Astrocyte of the cerebellum (primary cell): ENCODE measurements at regions of chr2 and their contacts with region 1.

Region 1: DNA sequence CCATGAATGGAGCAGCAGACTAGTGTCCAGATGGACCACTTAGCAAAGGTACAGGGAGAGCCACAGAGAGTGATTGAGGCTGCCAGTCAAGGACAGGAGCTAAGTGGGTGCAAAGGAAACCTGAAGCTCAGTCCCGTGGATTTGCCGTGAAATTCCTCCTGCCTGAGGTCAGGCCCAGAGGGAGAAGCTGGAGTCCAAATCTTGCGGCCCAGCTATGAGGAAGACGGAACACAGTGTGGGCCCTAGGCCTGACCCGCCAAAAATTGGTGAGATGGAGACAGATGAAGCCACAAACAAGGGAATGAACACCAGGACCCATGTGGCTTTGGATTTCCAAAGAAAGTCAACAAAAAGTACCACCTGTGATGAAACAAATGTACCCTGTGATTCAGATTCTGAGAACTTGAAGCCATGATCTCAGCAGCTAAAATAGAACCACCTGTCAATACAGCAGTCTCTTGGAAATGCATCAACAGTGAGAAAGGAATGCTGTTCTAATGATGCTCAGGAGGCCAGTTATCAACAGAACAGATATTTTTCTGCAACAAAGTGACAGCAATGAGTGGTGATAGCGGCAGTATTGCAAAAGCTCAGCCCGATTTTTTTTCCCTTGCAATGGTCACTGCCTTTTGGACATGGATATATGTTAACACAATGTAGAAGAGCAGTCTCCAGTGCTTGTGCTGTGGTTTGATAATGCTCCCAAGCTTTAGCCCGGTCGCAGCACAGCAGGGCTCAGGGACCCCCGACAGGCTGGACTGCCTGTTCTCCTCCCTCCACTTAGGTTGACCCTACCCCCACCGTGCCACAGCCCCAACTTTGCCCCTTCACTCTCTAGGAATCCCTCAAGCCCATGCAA is 10.7 kb downstream of the COL6A3 start:
- DNase-seq: peak; percentile 33
- H3K4me3 ChIP-seq: no peak overlapping the region
- CTCF ChIP-seq: no peak

Region 2: GRCh38 chr2:237330541-237330940 is 72.7 kb before region 1 on chr2:
- in situ Hi-C with region 1: loop called (anchors 5 kb)
- DNase-seq: no peak
- H3K4me3 ChIP-seq: no peak overlapping the region
- CTCF ChIP-seq: no peak

Region 3: DNA sequence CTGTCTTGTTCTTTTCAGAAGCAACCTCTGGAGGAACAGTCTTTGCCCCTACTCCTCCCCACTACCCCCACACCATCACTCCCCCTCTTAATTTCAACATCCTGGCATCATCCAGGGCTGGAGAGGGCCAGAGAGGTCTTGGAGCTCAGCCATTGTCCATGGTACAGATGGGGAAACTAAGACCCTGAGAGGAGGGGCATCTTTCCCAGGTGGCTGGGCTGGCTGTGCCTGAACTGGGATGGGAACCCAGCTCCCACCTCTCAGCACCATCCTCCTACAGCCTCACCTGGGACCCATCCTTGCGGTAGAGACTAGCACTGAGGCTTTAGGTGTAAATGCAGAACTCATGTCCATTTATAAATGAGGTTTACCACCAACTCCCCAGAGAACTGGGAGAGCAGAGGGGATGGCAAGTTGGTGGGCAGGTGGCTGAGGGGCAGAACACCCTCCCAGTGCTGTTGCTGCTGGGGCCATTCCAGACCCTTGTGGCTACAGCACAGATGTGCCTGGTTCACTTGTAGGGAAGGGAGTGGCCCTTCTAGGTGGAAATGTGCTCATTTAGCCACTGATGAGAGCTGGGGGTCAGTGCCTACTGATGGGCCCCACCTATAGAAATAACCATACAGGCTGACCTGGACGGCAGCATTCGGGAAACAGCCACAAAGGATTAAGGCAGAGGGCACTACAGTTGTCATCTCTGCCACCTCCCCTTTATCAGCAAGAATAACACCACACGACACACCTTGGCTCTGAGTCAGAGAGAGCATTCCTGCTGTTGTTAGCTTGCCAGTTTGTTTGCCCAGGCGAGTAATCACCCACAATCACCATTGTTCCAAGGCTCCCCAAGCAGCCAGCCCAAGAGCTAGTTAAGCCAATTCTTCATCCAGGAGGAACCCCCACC is 85.9 kb after region 1 on chr2:
- in situ Hi-C with region 1: no loop called
- DNase-seq: no peak
- H3K4me3 ChIP-seq: peak overlapping the region; percentile 90
- CTCF ChIP-seq: no peak